HEK293T (cell line): ENCODE measurements at regions of chr17 and their contacts with region 1.

Region 1: DNA sequence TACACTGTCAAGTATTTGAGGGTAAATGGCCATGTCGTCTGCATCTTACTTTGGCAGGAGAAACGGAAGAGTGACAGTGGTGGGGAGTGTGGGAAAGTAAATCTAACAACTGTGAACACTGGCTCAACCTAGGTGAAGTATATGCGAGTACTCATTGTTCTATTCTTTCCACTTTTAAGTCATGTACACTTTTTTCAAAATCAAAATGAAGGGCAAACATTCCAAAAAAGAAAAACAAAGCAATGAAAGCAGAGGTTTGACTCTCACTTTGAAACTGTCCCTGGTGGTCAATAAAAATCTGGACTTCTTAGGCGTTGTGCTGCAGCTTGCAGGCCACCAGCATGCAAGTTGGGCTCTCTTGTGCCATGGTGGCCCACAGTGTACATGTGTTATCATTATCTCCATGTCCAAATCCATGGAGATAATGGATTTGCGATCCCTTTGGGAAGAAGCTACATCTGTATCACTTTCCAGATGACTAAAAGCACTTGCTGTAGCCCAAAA is 32.6 kb downstream of the STAT5B start:
- DNase-seq: no peak

Region 2: DNA sequence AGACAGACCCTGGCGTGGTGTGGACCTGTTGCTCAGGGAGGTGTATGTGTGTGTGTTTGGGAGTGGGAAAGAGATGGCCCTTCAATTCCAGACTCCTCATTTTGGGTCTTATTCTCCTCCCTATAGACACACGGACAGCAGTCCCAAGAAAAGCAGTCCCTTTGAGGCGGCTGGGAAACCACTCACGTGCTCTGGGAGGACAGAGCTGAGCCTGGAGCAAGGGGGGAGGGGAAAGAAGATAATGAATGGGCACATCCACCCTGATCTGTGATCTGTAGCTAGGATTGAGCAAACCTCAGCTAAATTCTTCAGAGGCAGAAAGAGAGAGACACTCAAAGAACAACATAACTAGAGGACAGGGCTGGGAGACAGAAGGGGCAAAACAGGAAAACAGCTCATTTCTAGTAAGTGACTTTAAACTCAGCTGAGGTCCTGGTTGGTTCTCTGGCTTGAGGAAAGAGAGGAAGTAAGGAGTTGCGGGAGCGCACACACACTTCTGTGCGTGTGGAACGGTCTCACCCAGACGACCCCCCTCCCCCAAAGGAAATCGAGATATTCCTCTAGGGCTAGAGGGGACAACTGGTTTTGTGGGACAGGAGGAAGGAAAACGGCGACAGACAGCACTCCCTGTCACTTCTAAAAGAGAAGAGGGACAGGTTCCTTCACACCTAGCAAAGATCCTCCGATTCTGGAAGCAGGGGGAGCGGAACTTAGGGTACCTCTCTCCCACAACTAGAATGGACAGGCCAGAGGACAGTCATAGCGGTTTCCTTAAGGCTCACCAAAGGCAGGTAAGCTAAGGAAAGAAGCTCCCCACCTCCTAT is 89.4 kb before region 1 on chr17:
- CTCF ChIA-PET with region 1: no interaction called
- POLR2A ChIA-PET with region 1: no interaction called
- DNase-seq: no peak

Region 3: GRCh38 chr17:42227849-42228615 is 15.5 kb before region 1 on chr17:
- CTCF ChIA-PET with region 1: interaction called, 13 read pairs
- POLR2A ChIA-PET with region 1: no interaction called
- DNase-seq: no peak